ENCODE measurements at regions of chr15 and their contacts with region 1.

Region 1: DNA sequence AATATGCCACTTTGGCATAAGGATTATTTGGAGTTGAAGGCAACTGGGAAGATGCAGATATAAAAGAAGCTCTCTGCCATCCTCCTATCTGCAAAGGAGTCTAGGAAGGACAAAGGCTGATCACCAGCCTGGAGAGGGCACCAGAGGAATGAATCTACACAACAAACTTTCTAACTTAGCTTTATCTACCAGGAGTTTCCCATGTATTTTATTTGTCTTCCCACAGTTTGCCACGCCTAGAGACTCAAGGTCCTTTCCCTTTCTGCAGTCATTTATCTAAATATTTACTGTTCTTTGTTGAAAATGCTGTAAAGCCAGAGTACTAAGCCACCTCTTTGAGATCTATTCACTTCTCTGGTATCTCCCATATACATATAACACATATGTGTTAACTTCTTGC is 32.2 kb downstream of the GPR176 start:
- DNase-seq: peak; percentile 65
- H3K4me3 ChIP-seq: no peak overlapping the region
- H3K27ac ChIP-seq: no peak overlapping the region
- H3K4me1 ChIP-seq: peaks cover 6% of the 10 kb centered on the region
- H3K27me3 ChIP-seq: no peaks in the 10 kb centered on the region
- CTCF ChIP-seq: peak; percentile 55

Region 2: DNA sequence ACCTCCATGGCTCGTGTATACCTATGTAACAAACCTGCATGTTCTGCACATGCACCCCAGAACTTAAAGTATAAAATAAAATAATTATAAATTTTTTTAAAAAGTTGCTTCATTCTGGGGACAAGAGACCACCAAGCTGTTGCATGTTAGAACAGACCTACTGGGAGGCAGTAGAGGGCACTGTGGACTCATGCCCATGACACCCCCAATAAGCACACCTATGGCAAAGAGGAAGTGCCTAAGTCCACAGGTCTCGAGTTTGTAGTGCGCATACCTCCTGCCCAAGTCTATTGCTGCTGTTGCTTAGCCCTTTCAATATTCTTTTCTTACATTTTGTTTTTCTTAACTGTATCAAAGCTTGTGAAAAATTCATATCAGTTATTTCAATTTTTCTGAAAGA is 574.8 kb before region 1 on chr15:
- CTCF ChIA-PET with region 1: no interaction called
- POLR2A ChIA-PET with region 1: no interaction called
- intact Hi-C with region 1: no loop called
- DNase-seq: no peak
- H3K4me3 ChIP-seq: no peak overlapping the region
- H3K27ac ChIP-seq: no peak overlapping the region
- H3K4me1 ChIP-seq: no peaks in the 10 kb centered on the region
- H3K27me3 ChIP-seq: no peaks in the 10 kb centered on the region
- CTCF ChIP-seq: no peak

Region 3: GRCh38 chr15:39920510-39921273 is 32.9 kb after region 1 on chr15:
- CTCF ChIA-PET with region 1: interaction called, 5 read pairs
- POLR2A ChIA-PET with region 1: no interaction called
- intact Hi-C with region 1: loop called (anchors 5 kb)
- DNase-seq: peak; percentile 90
- H3K4me3 ChIP-seq: peak overlapping the region; percentile 58
- H3K27ac ChIP-seq: peak overlapping the region; percentile 25
- H3K4me1 ChIP-seq: peaks cover 16% of the 10 kb centered on the region
- H3K27me3 ChIP-seq: peaks cover 25% of the 10 kb centered on the region
- CTCF ChIP-seq: 0 out of 2 replicates have a peak, but pooled peaks have one; percentile 9

Region 4: DNA sequence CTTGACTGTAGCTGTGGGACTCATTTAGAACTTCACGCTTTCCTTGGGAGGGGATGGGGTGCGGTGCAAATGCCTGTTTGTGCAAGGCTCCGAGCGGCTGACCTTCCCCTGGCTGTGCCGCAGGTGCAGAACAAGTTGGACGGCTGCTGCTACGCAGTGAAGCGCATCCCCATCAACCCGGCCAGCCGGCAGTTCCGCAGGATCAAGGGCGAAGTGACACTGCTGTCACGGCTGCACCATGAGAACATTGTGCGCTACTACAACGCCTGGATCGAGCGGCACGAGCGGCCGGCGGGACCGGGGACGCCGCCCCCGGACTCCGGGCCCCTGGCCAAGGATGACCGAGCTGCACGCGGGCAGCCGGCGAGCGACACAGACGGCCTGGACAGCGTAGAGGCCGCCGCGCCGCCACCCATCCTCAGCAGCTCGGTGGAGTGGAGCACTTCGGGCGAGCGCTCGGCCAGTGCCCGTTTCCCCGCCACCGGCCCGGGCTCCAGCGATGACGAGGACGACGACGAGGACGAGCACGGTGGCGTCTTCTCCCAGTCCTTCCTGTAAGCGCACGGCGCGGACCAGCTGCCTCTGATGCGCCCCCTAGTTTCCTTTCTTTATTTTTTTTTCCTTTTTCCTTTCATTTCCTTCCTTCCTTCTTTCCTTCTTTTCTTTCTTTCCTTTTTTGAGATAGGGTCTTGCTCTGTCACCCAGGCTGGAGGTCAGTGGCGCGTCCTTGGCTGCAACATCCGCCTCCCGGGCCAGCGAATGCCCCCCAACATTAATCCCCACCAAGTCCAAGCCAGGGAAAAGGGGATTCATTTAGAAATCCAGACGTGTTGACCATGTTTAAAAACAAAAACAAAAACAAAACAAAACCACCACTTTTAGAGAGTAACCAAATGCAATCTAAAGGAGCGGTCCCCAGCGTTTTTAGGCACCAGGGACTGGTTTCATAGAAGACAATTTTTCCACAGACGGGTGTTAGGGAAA is 88.8 kb after region 1 on chr15:
- CTCF ChIA-PET with region 1: no interaction called
- POLR2A ChIA-PET with region 1: no interaction called
- intact Hi-C with region 1: loop called (anchors 5 kb)
- DNase-seq: peak; percentile 84
- H3K4me3 ChIP-seq: peak overlapping the region; percentile 58
- H3K27ac ChIP-seq: peak overlapping the region; percentile 44
- H3K4me1 ChIP-seq: peaks cover 13% of the 10 kb centered on the region
- H3K27me3 ChIP-seq: no peaks in the 10 kb centered on the region
- CTCF ChIP-seq: peak; percentile 86

Region 5: DNA sequence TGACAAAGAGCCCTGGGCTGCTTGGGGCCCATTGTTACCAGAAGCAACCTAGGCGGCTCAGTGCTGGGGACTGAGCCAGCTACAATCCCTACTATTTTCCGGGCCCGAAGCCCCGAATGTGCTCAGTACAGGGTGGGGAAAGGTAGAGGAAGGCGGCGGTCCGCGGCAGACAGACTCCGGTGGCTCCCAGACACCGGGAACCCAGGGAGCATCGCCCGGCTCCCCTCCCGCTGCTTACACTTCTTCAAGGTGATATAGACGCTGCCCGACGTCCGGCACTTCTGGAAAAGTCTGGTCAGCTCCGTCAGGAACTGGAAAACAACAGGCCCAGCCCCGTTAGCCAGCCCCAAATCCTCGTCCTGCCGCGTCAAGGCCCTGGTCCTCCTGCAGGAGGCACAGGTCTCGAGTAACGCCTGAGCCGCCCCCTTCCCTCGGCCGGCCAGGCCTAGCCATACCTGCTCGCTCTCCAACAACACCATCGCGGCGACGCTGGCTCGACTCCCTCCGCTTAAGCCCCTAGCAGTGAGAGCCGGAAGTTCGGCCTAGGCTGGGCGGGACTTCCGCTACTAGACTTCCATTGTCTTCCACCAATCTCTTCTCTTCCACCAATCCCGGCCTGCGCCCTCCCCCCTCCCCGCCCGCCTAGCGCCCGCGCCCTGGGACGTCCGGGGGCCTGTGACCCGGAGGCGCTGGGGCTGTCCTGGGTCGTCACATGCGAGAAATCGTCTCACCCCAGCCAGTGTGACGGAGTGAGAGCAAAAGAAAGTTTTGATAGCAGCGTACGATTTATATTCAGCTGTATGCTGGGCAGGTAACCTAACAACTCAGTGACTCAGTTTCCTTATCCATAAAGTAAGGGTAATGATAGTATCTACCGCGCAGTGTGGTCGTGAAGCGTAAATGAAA is 151.1 kb after region 1 on chr15 and contains the start of gene SRP14:
- CTCF ChIA-PET with region 1: no interaction called
- POLR2A ChIA-PET with region 1: no interaction called
- intact Hi-C with region 1: loop called (anchors 5 kb)
- DNase-seq: peak; percentile 95
- H3K4me3 ChIP-seq: peak within 1 kb of the TSS; percentile 80
- H3K27ac ChIP-seq: peak within 1 kb of the TSS; percentile 92
- H3K4me1 ChIP-seq: peaks cover 8% of the 10 kb centered on the region
- H3K27me3 ChIP-seq: no peaks in the 10 kb centered on the region
- CTCF ChIP-seq: no peak
- total RNA-seq, gene SRP14: 272 and 274 TPM in 2 replicates

Measured in A673 (cell line).